Heart right ventricle (tissue), 16 donors: ENCODE measurements at regions of chr15 and their contacts with region 1.

Region 1: DNA sequence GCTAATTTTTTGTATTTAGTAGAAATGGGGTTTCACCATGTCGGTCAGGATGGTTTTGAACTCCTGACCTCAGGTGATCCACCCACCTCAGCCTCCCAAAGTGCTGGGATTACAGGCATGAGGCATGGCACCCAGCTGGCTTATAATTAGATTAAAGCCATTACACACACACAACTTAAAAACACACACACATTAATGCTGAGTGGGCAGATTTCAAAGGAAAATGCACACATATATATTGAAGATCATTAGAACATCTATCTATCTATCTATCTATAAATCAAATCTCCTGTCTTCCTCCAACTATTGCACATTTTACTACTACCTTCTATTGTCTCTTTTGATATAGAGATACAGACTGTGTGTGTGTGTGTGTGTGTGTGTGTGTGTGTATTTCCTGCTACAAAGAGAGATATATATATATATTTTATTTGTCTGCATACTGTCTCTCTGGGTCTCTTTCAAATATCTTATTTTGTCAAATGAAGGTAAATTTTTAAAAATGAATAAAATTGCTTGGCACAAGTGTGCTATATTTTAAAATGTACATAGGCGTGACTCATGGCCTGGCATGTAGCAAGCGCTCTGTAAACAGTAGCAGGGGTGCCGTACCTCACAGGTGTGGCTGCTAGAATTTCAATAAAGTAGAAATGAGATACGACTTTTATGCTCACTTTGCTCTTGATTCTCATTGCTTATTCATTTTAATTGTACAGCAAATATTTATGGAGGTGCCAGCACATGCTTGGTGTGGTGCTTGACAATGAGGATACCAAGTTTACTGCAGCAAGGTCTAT is 655.8 kb downstream of the AGBL1 start:
- DNase-seq: no peak
- ATAC-seq: no peak
- H3K4me3 ChIP-seq: no peak overlapping the region
- H3K27ac ChIP-seq: no peak overlapping the region
- H3K4me1 ChIP-seq: no peaks in the 10 kb centered on the region
- H3K27me3 ChIP-seq: no peaks in the 10 kb centered on the region
- CTCF ChIP-seq: no peak

Region 2: DNA sequence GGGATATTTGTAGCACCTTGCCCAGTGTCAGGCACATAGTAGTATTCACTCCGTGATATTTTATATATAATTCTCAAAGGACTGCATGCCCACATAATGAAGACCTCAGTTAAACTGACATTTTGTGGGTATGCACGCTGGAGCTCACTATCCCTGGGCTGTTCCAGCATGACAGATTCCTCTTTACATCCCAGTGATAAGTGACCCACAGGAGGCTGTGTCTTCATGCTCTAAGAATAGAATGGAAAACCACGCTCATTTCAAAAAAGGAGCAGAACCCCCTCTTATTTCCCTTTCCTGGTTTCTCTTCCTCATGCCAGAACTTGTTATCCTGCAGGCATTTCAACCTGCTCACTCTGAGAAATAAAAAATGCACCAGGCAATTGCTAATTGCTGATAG is 61.7 kb after region 1 on chr15:
- intact Hi-C with region 1: loop called in 1 of 10 experiments (anchors 10 kb)
- DNase-seq: no peak
- ATAC-seq: no peak
- H3K4me3 ChIP-seq: no peak overlapping the region
- H3K27ac ChIP-seq: no peak overlapping the region
- H3K4me1 ChIP-seq: no peaks in the 10 kb centered on the region
- H3K27me3 ChIP-seq: no peaks in the 10 kb centered on the region
- CTCF ChIP-seq: no peak